Activated CD4-positive, alpha-beta T cell treated with anti-CD3 and anti-CD28 coated beads, Interleukin-2, amount 10 ng/mL, durations not matched to agents 7 days and 5 days (primary cell): ENCODE measurements at regions of chr6 and their contacts with region 1.

Region 1: GRCh38 chr6:128124670-128125069 is 223.8 kb upstream of the THEMIS start:
- DNase-seq: no peak
- H3K4me3 Mint-ChIP-seq: no peak overlapping the region
- H3K27ac Mint-ChIP-seq: no peak overlapping the region
- H3K4me1 Mint-ChIP-seq: peaks cover 3% of the 10 kb centered on the region
- H3K27me3 Mint-ChIP-seq: no peaks in the 10 kb centered on the region

Region 2: GRCh38 chr6:128135325-128135724 is 10.7 kb after region 1 on chr6:
- CTCF ChIA-PET with region 1: interaction called, 11 read pairs
- POLR2A ChIA-PET with region 1: no interaction called
- DNase-seq: no peak
- H3K4me3 Mint-ChIP-seq: no peak overlapping the region
- H3K27ac Mint-ChIP-seq: no peak overlapping the region
- H3K4me1 Mint-ChIP-seq: peaks cover 8% of the 10 kb centered on the region
- H3K27me3 Mint-ChIP-seq: no peaks in the 10 kb centered on the region